ENCODE measurements at regions of chr5 and their contacts with region 1.

Region 1: GRCh38 chr5:173907686-173908371 is 19.7 kb downstream of the CPEB4 start:
- DNase-seq: no peak
- ATAC-seq: peak; percentile 40

Region 2: DNA sequence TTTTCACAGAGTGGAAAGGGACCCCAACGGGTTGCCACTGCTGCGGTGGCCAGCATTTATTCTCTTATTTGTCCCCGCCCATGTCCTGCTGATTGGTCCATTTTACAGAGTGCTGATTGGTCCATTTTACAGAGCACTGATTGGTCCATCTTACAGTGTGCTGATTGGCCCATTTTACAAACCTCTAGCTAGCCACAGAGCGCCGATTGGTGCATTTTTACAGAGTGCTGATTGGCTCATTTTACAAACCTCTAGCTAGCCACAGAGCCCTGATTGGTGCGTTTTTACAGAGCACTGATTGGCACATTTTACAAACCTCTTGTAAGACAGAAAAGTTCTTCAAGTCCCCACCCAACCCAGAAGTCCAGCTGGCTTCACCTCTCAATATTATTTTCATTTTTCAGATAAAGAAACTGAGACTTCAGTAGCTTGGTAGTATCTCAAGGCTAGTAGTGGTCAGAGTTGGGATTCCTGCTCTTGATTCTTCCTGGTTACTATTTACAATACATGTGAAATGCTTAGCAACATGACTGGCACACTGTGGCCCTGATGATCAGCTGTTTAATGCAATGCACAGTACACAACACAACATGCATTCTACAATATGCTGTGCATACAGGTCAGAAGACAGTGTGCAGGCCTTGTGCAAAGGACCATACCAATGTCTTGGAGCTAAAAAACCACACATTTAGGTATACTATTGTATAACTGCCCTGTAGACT is 227.8 kb before region 1 on chr5:
- intact Hi-C with region 1: no loop called
- DNase-seq: no peak
- ATAC-seq: peak; percentile 61

Region 3: DNA sequence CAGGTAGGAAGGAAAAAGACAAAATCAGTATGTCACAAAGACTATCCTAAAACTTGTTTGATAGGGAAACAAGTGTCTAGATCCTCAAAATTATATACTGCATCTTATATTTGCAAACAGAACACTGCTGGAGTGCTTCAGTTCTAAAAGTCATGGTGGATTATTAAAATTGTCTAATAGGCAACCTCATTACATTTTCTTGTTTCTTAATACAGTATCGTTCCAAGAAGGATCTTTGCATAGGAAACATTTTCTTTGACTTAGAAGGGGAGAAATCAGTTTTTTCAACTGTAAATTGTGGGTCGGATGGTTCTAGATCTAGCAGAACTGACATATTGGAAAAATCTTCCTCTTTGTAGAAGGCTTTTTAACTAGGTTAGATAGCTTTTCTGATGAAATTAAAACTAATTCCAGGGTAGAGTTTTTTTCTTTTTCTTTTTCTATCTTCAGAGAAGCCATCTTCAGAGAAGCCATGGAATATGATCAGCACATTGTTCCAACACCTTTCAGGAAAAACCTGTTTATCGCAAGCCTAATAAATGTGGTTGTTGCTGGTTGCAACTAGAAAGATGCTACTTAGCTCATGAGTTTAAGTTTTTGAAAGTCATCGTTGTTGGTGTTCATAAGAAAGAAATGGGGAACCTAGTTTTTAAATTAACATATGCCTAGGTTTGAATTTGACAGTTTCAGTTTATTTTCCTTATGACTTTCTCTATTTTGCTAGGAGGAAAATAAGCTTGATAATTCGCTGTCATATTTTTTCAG is 12.2 kb before region 1 on chr5:
- intact Hi-C with region 1: loop called (anchors 2 kb)
- DNase-seq: no peak
- ATAC-seq: no peak

Measured in Right ventricle myocardium inferior (tissue), 1 donor.